SK-MEL-5 (cell line): ENCODE measurements at regions of chr4 and their contacts with region 1.

Region 1: DNA sequence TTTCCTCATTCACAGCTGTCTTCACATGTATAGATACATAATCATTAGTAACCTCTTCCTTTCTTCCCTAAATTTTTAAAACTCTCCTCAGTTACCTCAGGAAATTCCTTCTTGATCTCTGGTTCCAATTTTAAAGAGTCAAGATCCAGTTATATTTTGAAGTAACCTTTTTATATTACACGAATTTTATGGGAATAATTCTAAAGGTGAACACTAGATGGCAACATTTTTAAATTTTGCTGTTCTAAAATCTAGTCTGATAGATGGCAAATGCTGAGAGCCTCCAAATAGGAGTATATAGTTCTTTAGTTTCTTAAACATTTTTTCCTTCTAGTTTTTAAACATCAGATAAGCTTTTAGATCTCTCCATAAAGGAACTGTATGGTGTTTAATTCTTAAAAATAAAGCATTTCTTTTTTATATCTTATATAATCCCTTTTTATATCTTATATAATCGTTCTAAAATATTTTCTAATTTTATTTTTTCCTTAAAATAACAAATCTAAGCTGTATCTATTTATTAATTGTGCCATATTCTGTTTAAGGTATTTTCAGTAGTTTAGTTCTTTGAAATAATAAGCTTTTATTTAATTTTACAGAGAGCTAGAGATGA is 37.9 kb upstream of the PAPSS1 start:
- DNase-seq: peak; percentile 47

Region 2: GRCh38 chr4:107876099-107876498 is 118.1 kb after region 1 on chr4:
- in situ Hi-C with region 1: no loop called
- DNase-seq: no peak

Region 3: GRCh38 chr4:107913281-107913899 is 155.4 kb after region 1 on chr4:
- in situ Hi-C with region 1: loop called (anchors 25 kb)
- DNase-seq: peak; percentile 73

Region 4: DNA sequence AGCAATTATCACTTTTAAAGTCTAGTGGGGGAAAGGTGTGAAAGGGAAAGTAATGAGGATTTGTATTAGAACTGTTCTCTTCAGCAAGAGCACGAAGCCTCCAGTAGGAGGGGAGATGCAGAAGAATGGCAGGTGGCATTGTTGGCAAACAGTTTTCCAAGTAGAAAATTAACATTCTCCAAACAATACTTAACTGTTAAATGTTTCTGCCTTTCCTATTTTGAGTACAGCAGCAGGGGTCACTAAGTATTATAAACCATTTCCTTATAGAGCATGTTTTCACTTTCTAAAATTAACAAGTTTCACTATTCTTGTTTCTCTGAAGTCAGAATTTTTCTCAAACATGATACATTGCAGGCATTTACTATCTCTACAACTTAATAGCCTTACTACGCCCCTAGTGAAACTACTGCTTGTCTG is 352.0 kb after region 1 on chr4:
- in situ Hi-C with region 1: no loop called
- DNase-seq: no peak